ENCODE measurements at regions of chr14 and their contacts with region 1.

Region 1: GRCh38 chr14:24463017-24463883 is 20.7 kb upstream of the SDR39U1 start:
- DNase-seq: peak; percentile 25
- ATAC-seq: peak; percentile 85
- H3K4me3 ChIP-seq: no peak overlapping the region
- H3K27ac ChIP-seq: peak overlapping the region; percentile 31
- H3K4me1 ChIP-seq: peaks cover 7% of the 10 kb centered on the region
- H3K27me3 ChIP-seq: no peaks in the 10 kb centered on the region
- CTCF ChIP-seq: no peak
- EP300 ChIP-seq: no peak
- POLR2A ChIP-seq: no peak
- RAD21 ChIP-seq: no peak

Region 2: DNA sequence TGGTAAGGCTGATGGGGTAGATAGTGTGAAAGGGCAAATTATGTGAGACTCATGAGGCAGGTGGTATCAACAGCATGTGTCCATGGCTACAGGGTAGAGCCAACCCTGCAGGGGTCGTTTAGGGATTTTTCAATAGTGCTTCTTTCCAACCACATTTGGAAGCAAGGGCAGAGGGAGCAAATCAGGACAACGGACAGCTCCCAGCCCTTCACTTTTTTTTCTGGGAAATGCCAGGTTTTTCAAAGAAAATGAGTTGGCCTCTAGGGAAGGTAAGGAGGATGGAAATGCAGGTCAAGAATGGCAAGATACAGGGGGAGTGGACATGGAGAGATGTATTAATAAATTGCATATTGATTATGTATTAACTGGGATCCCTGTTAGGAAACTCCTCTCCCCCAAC is 49.8 kb after region 1 on chr14:
- CTCF ChIA-PET with region 1: no interaction called
- POLR2A ChIA-PET with region 1: no interaction called
- RAD21 ChIA-PET with region 1: no interaction called
- SMC1A ChIA-PET with region 1: no interaction called
- in situ Hi-C with region 1: loop called (anchors 5 kb)
- intact Hi-C with region 1: no loop called
- DNase-seq: no peak
- ATAC-seq: no peak
- H3K4me3 ChIP-seq: no peak overlapping the region
- H3K27ac ChIP-seq: no peak overlapping the region
- H3K4me1 ChIP-seq: no peaks in the 10 kb centered on the region; the same call in 1 of the 2 replicates
- H3K27me3 ChIP-seq: no peaks in the 10 kb centered on the region
- CTCF ChIP-seq: no peak
- EP300 ChIP-seq: no peak
- POLR2A ChIP-seq: no peak
- RAD21 ChIP-seq: no peak

Region 3: GRCh38 chr14:24673534-24674203 is 210.4 kb after region 1 on chr14:
- CTCF ChIA-PET with region 1: no interaction called
- POLR2A ChIA-PET with region 1: no interaction called
- RAD21 ChIA-PET with region 1: no interaction called
- SMC1A ChIA-PET with region 1: no interaction called
- in situ Hi-C with region 1: no loop called
- intact Hi-C with region 1: no loop called
- DNase-seq: peak; percentile 71
- ATAC-seq: peak; percentile 86
- H3K4me3 ChIP-seq: peak overlapping the region; percentile 75
- H3K27ac ChIP-seq: peak overlapping the region; percentile 99
- H3K4me1 ChIP-seq: peaks cover 36% of the 10 kb centered on the region
- H3K27me3 ChIP-seq: no peaks in the 10 kb centered on the region
- CTCF ChIP-seq: no peak
- EP300 ChIP-seq: 0 out of 4 replicates have a peak, but pooled peaks of 1 of the 2 experiments have one; percentile 5
- POLR2A ChIP-seq: no peak
- RAD21 ChIP-seq: no peak

Region 4: GRCh38 chr14:24900269-24901100 is 437.2 kb after region 1 on chr14:
- CTCF ChIA-PET with region 1: no interaction called
- POLR2A ChIA-PET with region 1: no interaction called
- RAD21 ChIA-PET with region 1: no interaction called
- SMC1A ChIA-PET with region 1: no interaction called
- in situ Hi-C with region 1: no loop called
- intact Hi-C with region 1: no loop called
- DNase-seq: no peak
- ATAC-seq: no peak
- H3K4me3 ChIP-seq: no peak overlapping the region
- H3K27ac ChIP-seq: no peak overlapping the region
- H3K4me1 ChIP-seq: no peaks in the 10 kb centered on the region
- H3K27me3 ChIP-seq: no peaks in the 10 kb centered on the region
- CTCF ChIP-seq: no peak
- EP300 ChIP-seq: no peak
- POLR2A ChIP-seq: no peak
- RAD21 ChIP-seq: no peak